ENCODE measurements at regions of chr20 and their contacts with region 1.

Region 1: DNA sequence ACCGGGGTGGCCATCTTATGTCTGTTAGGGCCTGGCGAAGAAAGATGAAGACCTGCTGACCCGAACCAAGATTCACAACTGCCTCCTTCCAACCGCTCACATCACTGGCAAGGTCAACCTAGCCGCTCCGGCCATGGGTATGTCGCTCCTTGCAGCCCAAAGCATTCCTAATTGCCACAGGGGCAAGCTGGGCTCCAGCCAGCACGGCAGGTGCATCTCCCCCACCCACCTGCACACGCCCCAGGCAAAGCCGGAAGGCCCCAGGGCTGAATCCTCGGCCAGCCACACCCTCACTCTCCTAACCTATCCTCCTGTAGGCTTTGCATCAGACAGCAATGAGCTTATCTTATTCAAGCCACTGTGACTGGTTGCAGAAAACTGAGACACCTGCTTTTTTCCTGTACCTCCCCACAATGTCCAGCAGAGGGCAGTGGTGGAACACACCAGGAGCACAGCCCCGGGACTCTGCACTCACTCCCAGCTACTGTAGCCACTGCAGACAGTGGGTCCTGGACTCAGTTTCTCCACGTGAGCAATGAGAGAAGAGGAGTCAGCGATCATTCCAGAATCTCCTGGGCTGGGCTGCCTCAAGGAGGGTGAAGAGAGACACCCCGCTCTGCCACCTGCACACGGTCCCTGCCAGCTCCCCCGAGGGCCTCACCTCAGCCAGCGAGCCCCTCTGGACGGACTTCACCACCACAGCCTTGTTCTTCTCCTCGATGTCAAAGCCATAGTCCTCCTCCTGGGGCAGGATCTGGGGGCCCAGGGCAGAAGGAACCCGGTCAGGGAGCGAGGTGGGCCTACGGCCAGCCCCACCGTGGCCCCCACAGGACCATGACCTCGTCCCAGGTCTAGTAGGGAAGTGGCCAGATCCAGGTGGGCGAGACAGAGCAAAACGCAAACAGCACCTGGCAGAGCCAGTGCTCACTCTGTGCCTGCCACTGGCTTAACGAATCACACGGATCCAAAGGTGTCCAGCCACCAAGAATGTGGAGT is 170.0 kb downstream of the PREX1 start:
- DNase-seq: peak; percentile 71
- H3K4me3 ChIP-seq: no peak overlapping the region
- H3K27ac ChIP-seq: peak overlapping the region; percentile 7
- H3K4me1 ChIP-seq: peaks cover 3% of the 10 kb centered on the region
- H3K27me3 ChIP-seq: no peaks in the 10 kb centered on the region
- CTCF ChIP-seq: peak; percentile 87 to 88
- POLR2A ChIP-seq: no peak

Region 2: DNA sequence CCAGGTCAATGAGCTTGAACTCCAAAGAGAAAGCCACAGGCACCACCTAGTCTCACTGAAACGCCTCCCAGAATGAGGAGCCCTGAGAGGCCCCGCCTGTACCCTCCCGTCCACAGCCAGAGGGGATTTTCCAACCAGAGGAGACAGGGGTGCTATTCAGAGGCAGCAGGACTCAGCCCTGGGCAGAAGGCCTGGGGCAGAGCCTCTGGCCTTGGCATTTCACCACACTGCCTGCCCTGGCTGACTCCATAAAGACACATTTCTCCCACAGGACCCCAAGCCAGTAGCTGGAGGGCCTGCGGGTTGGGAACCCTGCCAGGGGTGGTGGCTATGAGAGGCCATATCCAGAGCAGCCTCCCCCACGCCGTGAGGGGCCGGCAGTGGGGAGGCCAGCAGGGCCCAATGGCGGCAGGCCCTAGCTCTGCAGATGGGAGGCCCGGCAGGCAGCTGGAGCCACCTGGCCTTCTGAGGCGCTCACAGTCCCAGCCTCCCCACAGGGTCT is 10.7 kb after region 1 on chr20:
- CTCF ChIA-PET with region 1: interaction called, 26 read pairs
- POLR2A ChIA-PET with region 1: no interaction called
- dilution Hi-C with region 1: no loop called
- intact Hi-C with region 1: no loop called
- DNase-seq: no peak
- H3K4me3 ChIP-seq: no peak overlapping the region
- H3K27ac ChIP-seq: peak overlapping the region; percentile 57
- H3K4me1 ChIP-seq: peaks cover 34% of the 10 kb centered on the region
- H3K27me3 ChIP-seq: no peaks in the 10 kb centered on the region
- CTCF ChIP-seq: no peak
- POLR2A ChIP-seq: no peak

Region 3: DNA sequence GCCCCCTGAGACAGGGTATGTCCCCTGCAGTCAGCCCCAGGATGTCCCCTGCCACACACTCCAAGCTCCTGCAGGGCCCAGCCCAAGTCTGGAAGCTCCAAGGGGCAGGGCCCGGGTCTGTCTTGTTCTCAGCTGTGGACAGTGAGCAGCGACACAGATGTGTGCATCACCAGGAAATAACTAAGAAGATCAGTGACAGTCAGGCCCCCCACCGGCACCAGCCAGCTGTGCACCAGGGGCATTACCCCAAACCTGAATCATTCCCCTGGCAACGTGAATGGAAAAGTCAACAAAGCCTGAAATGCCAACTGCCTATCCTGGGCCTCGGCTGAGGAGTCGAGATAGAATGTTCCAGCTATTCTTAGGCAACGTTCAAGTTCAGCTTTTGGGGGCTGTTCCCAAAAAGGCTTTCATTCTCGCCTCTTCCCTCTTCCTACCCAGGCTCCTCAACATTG is 65.0 kb after region 1 on chr20:
- CTCF ChIA-PET with region 1: interaction called, 13 read pairs
- POLR2A ChIA-PET with region 1: no interaction called
- dilution Hi-C with region 1: no loop called
- intact Hi-C with region 1: no loop called
- DNase-seq: peak; percentile 33
- H3K4me3 ChIP-seq: no peak overlapping the region
- H3K27ac ChIP-seq: peak overlapping the region; percentile 90
- H3K4me1 ChIP-seq: peaks cover 42% of the 10 kb centered on the region
- H3K27me3 ChIP-seq: no peaks in the 10 kb centered on the region
- CTCF ChIP-seq: no peak
- POLR2A ChIP-seq: no peak

Region 4: DNA sequence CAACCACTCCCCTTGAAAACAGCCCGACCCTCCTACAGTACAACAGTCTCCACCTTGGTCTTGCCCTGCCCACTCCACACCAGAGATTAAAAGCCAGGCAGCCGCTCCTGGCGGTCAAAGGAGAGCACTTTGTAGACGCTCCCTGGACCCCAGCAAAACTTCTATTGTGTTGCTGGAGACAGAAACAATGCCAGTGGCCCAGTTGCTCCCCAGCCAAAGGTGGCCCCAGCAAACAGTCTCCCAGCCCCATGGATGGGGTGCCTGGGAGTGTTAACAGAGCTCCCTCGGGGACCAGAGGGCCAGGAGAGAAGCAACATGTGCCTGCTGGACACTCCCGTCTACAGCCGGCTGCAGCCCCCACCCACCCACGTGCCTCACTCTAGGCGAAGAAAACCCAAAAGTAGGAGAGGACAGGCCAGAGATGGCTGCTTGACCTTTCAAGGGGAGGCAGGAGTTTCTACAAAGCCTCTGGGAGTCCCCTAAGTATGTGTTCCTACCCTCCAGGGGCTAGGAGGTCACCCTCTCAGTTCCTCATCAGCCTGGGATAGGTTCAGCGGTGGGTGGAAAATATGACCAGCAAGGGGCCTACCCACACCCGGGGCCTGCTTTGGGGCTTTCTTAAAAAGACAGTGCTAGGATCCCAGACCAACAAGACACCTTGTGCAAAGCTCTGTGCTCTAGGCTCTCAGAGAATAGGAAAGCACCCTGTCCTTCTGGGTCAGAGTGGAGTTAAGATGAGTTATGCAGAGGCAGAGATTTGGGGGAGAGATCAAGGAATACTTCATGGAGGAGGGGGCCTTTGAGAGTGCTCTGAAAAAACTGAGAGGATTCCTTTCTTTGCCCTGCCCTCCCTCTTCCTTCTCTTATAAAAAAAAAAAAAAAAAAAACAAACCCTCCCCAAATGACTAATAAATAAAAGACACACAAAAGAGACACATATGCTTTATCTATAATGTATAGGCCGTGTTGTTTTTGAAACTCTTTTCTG is 189.0 kb after region 1 on chr20:
- CTCF ChIA-PET with region 1: interaction called, 10 read pairs
- POLR2A ChIA-PET with region 1: no interaction called
- dilution Hi-C with region 1: no loop called
- intact Hi-C with region 1: no loop called
- DNase-seq: peak; percentile 62
- H3K4me3 ChIP-seq: no peak overlapping the region
- H3K27ac ChIP-seq: peak overlapping the region; percentile 51
- H3K4me1 ChIP-seq: peaks cover 40% of the 10 kb centered on the region
- H3K27me3 ChIP-seq: no peaks in the 10 kb centered on the region
- CTCF ChIP-seq: no peak
- POLR2A ChIP-seq: no peak

Region 5: DNA sequence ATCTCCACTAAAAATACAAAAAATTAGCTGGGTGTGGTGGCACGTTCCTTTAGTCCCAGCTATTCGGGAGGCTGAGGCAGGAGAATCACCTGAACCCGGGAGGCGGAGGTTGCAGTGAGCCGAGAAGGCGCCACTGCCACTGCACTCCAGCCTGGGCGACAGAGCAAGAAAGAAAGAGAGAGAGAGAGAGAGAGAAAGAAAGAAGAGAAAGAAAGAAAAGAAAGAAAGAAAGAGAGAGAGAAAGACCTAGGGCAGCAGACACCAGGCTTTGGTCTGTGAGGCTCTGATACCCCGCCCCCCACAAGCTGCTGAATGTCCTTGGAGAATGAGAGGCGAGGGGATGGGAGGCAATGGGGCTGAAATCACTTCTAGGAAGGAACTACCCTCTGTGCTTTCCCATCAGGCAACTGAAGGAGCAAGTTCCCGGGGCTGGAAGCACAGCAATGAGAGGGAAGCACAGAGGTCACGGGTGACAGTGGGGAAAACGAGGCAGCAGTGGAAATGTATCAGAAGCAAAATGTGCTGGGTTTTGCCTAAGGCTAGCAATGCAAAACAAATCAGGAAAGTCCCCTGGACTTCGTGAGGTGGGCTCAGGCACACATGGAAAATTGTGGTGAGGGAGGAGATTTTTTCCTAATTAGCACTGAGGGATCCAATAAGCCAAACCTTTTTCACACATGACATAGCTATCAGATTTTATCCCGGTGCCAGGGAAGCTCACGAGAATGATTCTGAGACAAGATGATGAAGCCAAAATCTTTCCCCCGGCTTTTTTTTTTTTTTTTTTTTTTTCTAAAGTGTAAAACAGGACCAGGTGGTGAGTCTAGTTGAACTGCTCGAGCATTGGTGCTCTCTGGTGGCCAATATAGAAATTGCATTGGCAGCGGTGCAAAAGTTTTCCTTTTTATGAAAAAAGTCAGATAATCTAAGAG is 246.9 kb after region 1 on chr20:
- CTCF ChIA-PET with region 1: interaction called, 126 read pairs
- POLR2A ChIA-PET with region 1: interaction called, 5 read pairs
- dilution Hi-C with region 1: loop called (anchors 25 kb)
- intact Hi-C with region 1: loop called (anchors 1 kb)
- DNase-seq: peak; percentile 76
- H3K4me3 ChIP-seq: no peak overlapping the region
- H3K27ac ChIP-seq: no peak overlapping the region
- H3K4me1 ChIP-seq: peaks cover 14% of the 10 kb centered on the region
- H3K27me3 ChIP-seq: no peaks in the 10 kb centered on the region
- CTCF ChIP-seq: peak; percentile 69 to 76
- POLR2A ChIP-seq: no peak

Region 6: DNA sequence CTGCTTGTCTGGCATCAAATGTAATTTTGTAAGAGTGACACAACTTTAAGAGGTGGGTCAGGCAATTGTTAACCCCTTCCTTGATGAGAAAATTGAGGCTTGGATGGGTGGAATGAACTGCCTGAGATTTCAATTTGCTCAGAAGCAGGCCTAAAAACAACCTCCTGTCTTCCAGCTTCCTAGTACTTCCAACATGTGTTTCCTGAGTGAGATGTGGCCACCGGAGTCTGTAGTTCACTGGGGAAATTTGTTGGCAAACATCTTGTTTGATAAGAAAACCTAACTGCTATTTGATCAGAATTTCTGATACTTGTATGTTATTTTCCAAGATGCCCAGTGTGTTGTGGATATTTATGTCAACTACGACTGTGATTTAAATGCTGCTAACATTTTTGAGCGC is 315.0 kb after region 1 on chr20:
- CTCF ChIA-PET with region 1: interaction called, 12 read pairs
- POLR2A ChIA-PET with region 1: no interaction called
- dilution Hi-C with region 1: no loop called
- intact Hi-C with region 1: no loop called
- DNase-seq: peak; percentile 88
- H3K4me3 ChIP-seq: no peak overlapping the region
- H3K27ac ChIP-seq: peak overlapping the region; percentile 17
- H3K4me1 ChIP-seq: peaks cover 24% of the 10 kb centered on the region
- H3K27me3 ChIP-seq: no peaks in the 10 kb centered on the region
- CTCF ChIP-seq: no peak
- POLR2A ChIP-seq: no peak